Activated CD8-positive, alpha-beta T cell treated with anti-CD3 and anti-CD28 coated beads for 36 hours (primary cell): ENCODE measurements at regions of chr4 and their contacts with region 1.

Region 1: DNA sequence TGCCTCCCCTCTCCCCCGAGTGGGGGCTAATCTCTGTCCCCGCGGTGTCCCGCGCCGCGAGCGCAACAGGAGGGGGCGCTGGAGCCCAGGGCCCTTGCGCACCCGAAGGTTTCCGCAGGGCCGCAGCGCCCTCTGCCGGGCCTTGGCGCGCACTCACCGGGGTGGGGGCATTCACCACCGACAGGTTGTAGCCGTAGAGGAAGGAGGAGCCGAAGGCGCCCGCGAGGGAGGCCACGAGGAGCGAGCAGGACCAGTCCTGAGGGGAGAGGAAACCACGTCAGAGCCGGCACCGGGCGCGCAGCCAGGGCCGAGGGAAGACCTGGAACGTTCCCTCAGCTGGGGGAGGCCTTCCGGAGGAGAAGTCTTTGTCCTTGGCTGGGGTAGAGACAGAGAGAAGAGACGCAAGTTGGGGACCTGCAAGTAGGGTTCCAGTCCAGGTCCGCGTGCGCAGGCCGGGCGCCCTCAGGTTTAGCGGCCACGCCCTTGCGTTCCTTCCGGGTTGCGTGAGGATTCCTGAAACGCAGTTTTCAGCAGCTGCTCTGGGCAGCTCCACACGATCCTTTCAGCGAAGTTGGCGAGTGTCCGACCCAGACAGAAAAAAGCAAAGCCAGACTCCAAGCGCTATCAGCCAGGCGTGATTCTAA is 2.4 kb downstream of the SLC2A9 start:
- DNase-seq: peak; percentile 96
- ATAC-seq: peak; percentile 99
- H3K4me3 Mint-ChIP-seq: peak overlapping the region; percentile 85
- H3K27ac Mint-ChIP-seq: peak overlapping the region; percentile 91
- H3K4me1 Mint-ChIP-seq: peaks cover 8% of the 10 kb centered on the region
- H3K27me3 Mint-ChIP-seq: no peaks in the 10 kb centered on the region
- CTCF ChIP-seq: peak; percentile 99

Region 2: DNA sequence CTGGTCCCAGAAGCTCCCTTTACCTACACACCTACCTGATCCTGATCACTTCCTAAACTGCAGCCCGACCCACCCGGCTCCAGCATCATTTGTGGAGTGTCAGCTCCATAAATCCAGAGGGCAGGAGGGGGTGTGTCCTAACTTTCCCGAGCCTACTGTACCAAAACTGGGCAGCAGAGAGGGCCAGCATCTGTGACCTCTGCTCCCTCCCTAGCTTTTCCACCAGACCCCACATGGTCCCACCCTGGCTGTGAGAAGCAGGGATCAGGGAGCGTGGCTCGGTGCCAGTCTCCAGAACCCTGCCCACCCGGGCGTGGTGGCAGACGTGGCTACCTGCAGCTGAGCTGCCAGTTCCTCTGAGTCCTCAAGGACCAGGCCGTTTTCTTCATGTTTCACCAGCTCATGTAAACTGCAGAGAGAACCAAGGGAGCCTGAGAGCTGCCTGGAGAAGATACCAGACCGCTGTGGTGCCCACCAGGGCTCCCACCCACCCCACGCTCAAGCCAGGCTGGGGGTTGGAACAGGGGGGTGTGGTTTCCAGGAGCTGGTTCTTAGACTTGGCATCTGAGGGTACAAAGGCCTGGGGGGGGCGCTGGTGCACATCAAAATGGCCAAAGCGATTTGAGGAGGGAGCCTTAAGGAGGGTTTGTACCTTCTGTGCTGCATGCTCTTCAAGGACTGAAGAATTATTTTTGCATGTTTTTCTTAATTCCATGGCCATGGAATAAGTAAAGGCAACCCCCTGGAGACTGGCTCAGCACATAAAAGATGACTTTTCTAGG is 314.2 kb before region 1 on chr4:
- CTCF ChIA-PET with region 1: interaction called, 65 read pairs
- POLR2A ChIA-PET with region 1: no interaction called
- intact Hi-C with region 1: loop called (anchors 5 kb)
- DNase-seq: no peak
- ATAC-seq: no peak
- H3K4me3 Mint-ChIP-seq: no peak overlapping the region
- H3K27ac Mint-ChIP-seq: no peak overlapping the region
- H3K4me1 Mint-ChIP-seq: peaks cover 10% of the 10 kb centered on the region
- H3K27me3 Mint-ChIP-seq: no peaks in the 10 kb centered on the region
- CTCF ChIP-seq: no peak

Region 3: DNA sequence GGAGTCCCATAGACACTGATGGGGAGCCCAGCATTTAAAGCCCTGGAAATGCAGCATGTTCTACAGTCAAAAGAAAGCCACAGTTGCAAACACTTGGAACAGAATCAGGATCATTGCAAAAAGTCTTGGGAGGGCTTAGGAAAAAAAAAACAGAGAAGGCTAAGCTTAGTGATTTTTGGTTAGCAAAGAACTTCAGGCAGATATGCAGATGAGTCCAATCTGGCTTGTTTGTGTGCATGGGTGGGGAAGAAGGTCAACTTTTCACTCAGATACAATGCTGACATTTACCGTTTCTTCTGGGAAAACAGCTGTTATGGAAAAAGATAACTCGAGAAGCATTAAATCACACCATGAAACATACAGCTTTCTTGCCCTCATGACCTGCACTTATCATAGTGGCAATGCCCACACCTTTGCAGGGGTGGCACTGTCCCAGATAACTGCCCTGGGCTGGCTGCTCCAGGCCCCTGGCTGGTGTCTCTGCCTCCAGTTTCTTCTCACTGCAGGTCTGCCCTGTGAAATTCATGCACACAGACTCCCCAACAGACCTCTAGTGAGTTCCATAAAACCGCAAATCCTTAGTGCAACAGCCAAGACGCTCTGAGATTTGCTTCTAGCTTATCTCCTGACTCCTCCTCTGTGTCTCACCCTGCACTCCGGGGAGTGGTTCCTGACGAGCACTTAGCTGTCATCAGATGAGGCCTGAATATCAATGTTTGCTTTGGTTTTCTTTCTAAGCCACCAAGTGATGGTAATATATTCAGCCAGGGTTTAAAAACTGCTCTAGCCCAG is 138.3 kb before region 1 on chr4:
- CTCF ChIA-PET with region 1: interaction called, 8 read pairs
- POLR2A ChIA-PET with region 1: no interaction called
- intact Hi-C with region 1: loop called (anchors 10 kb)
- DNase-seq: no peak
- ATAC-seq: no peak
- H3K4me3 Mint-ChIP-seq: no peak overlapping the region
- H3K27ac Mint-ChIP-seq: no peak overlapping the region
- H3K4me1 Mint-ChIP-seq: no peaks in the 10 kb centered on the region
- H3K27me3 Mint-ChIP-seq: peaks cover 1% of the 10 kb centered on the region
- CTCF ChIP-seq: no peak

Region 4: DNA sequence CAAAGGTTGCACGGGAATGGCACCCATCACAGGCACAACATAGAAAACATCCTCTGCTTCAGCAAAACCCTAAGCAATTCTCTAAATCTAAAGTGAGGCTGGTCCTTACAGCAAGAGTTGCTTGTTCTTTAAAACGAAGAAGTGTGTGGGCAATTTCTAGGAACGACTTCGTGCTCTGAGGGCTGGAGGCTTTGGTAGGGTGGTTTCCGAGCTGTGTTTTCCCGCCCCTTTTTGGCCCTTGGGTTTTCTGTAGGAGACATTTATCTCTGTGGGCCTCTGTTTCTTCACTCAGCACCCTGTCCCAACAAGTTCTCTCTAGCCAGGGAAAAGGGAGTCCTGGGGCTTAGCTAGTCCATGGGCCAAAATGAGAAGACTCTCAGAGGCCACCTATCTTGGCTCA is 81.9 kb before region 1 on chr4:
- CTCF ChIA-PET with region 1: no interaction called
- POLR2A ChIA-PET with region 1: no interaction called
- intact Hi-C with region 1: no loop called
- DNase-seq: peak; percentile 14
- ATAC-seq: peak; percentile 13
- H3K4me3 Mint-ChIP-seq: no peak overlapping the region
- H3K27ac Mint-ChIP-seq: no peak overlapping the region
- H3K4me1 Mint-ChIP-seq: no peaks in the 10 kb centered on the region
- H3K27me3 Mint-ChIP-seq: no peaks in the 10 kb centered on the region
- CTCF ChIP-seq: no peak

Region 5: GRCh38 chr4:10466161-10466560 is 447.2 kb after region 1 on chr4:
- CTCF ChIA-PET with region 1: no interaction called
- POLR2A ChIA-PET with region 1: no interaction called
- intact Hi-C with region 1: no loop called
- DNase-seq: no peak
- ATAC-seq: no peak
- H3K4me3 Mint-ChIP-seq: no peak overlapping the region
- H3K27ac Mint-ChIP-seq: no peak overlapping the region
- H3K4me1 Mint-ChIP-seq: peaks cover 4% of the 10 kb centered on the region
- H3K27me3 Mint-ChIP-seq: peaks cover 27% of the 10 kb centered on the region
- CTCF ChIP-seq: no peak